A549 (cell line): ENCODE measurements at regions of chr2 and their contacts with region 1.

Region 1: GRCh38 chr2:74833418-74834233 is at the start of gene HK2:
- DNase-seq: peak; percentile 62 to 78
- ATAC-seq: peak; percentile 80 to 88
- H3K4me3 ChIP-seq: peak within 1 kb of the TSS; percentile 47
- H3K27ac ChIP-seq: peak within 1 kb of the TSS; percentile 15 to 79; a peak in 5 of 6 replicates
- H3K4me1 ChIP-seq: peaks cover 7% of the 10 kb centered on the region; the same call in 1 of the 3 replicates
- CTCF ChIP-seq: no peak
- EP300 ChIP-seq: no peak
- POLR2A ChIP-seq: no peak
- RAD21 ChIP-seq: no peak
- polyA plus RNA-seq, gene HK2: 1.1 and 1.2 TPM in 2 replicates

Region 2: DNA sequence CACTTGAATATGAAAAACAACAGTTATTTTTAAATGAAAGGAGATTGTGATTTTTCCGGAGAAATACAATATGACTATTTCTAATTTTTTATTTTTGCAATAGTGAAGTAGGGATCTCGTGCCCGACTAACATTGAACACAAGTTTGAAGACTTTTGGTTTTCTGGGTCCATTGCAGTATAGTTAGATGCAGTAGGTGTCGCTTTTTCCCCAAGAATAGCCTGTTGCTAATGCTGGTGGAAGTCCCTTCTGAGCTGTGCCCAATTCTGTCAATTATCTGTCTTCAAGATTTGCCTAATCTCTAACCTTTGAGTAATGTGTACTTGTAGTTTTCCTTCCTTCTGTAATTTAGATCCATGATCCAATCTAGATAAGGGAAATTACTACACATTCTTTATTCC is 143.1 kb before region 1 on chr2:
- CTCF ChIA-PET with region 1: interaction called, 11 read pairs
- POLR2A ChIA-PET with region 1: no interaction called
- DNase-seq: peak; percentile 70 to 73
- ATAC-seq: peak; percentile 85 to 94
- H3K4me3 ChIP-seq: no peak overlapping the region
- H3K27ac ChIP-seq: no peak overlapping the region
- H3K4me1 ChIP-seq: no peaks in the 10 kb centered on the region; the same call in 2 of the 3 replicates
- CTCF ChIP-seq: peak; percentile 97
- EP300 ChIP-seq: no peak
- POLR2A ChIP-seq: no peak
- RAD21 ChIP-seq: peak; percentile 96 to 99

Region 3: GRCh38 chr2:74740389-74741075 is 93.1 kb before region 1 on chr2:
- CTCF ChIA-PET with region 1: interaction called, 14 read pairs
- POLR2A ChIA-PET with region 1: no interaction called
- DNase-seq: peak; percentile 88 to 95
- ATAC-seq: peak; percentile 95 to 98
- H3K4me3 ChIP-seq: no peak overlapping the region
- H3K27ac ChIP-seq: peak overlapping the region; percentile 34 to 75
- H3K4me1 ChIP-seq: peaks cover 28% of the 10 kb centered on the region
- CTCF ChIP-seq: no peak
- EP300 ChIP-seq: peak; percentile 5 to 45; a peak in 2 of 5 replicates
- POLR2A ChIP-seq: no peak
- RAD21 ChIP-seq: peak; percentile 22 to 41; a peak in 4 of 5 replicates

Region 4: GRCh38 chr2:74845217-74846011 is 11.8 kb after region 1 on chr2:
- CTCF ChIA-PET with region 1: interaction called, 32 read pairs
- POLR2A ChIA-PET with region 1: no interaction called
- DNase-seq: peak; percentile 55 to 76
- ATAC-seq: peak; percentile 96 to 97
- H3K4me3 ChIP-seq: no peak overlapping the region
- H3K27ac ChIP-seq: peak overlapping the region; percentile 5 to 70; a peak in 5 of 6 replicates
- H3K4me1 ChIP-seq: peaks cover 25% of the 10 kb centered on the region
- CTCF ChIP-seq: no peak
- EP300 ChIP-seq: no peak
- POLR2A ChIP-seq: no peak
- RAD21 ChIP-seq: no peak

Region 5: GRCh38 chr2:74856004-74856578 is 22.5 kb after region 1 on chr2:
- CTCF ChIA-PET with region 1: interaction called, 32 read pairs
- POLR2A ChIA-PET with region 1: no interaction called
- DNase-seq: peak in 1 of 2 experiments; percentile 37
- ATAC-seq: peak; percentile 18 to 68; a peak in 3 of 6 replicates
- H3K4me3 ChIP-seq: no peak overlapping the region
- H3K27ac ChIP-seq: peak overlapping the region in 1 of 2 experiments; percentile 21; a peak in 1 of 6 replicates
- H3K4me1 ChIP-seq: peaks cover 10% of the 10 kb centered on the region
- CTCF ChIP-seq: no peak
- EP300 ChIP-seq: no peak
- POLR2A ChIP-seq: no peak
- RAD21 ChIP-seq: no peak

Region 6: GRCh38 chr2:75041731-75042600 is 208.3 kb after region 1 on chr2:
- CTCF ChIA-PET with region 1: no interaction called
- POLR2A ChIA-PET with region 1: no interaction called
- DNase-seq: no peak
- ATAC-seq: no peak
- H3K4me3 ChIP-seq: no peak overlapping the region
- H3K27ac ChIP-seq: no peak overlapping the region
- H3K4me1 ChIP-seq: peaks cover 1% of the 10 kb centered on the region
- CTCF ChIP-seq: no peak
- EP300 ChIP-seq: no peak
- POLR2A ChIP-seq: no peak
- RAD21 ChIP-seq: no peak